ENCODE measurements at regions of chr18 and their contacts with region 1.

Region 1: GRCh38 chr18:70082430-70082829 is 123.1 kb downstream of the RTTN start:
- DNase-seq: no peak
- ATAC-seq: no peak
- H3K4me3 ChIP-seq: no peak overlapping the region
- H3K4me3 Mint-ChIP-seq: no peak overlapping the region
- H3K27ac ChIP-seq: no peak overlapping the region
- H3K27ac Mint-ChIP-seq: no peak overlapping the region
- H3K4me1 ChIP-seq: no peaks in the 10 kb centered on the region
- H3K4me1 Mint-ChIP-seq: no peaks in the 10 kb centered on the region
- H3K27me3 ChIP-seq: no peaks in the 10 kb centered on the region
- H3K27me3 Mint-ChIP-seq: no peaks in the 10 kb centered on the region

Region 2: GRCh38 chr18:68298330-68298729 is 1784.1 kb before region 1 on chr18:
- CTCF ChIA-PET with region 1: no interaction called
- POLR2A ChIA-PET with region 1: no interaction called
- intact Hi-C with region 1: no loop called
- DNase-seq: no peak
- ATAC-seq: no peak
- H3K4me3 ChIP-seq: no peak overlapping the region
- H3K4me3 Mint-ChIP-seq: no peak overlapping the region
- H3K27ac ChIP-seq: no peak overlapping the region
- H3K27ac Mint-ChIP-seq: no peak overlapping the region
- H3K4me1 ChIP-seq: no peaks in the 10 kb centered on the region
- H3K4me1 Mint-ChIP-seq: no peaks in the 10 kb centered on the region
- H3K27me3 ChIP-seq: no peaks in the 10 kb centered on the region
- H3K27me3 Mint-ChIP-seq: no peaks in the 10 kb centered on the region

Region 3: DNA sequence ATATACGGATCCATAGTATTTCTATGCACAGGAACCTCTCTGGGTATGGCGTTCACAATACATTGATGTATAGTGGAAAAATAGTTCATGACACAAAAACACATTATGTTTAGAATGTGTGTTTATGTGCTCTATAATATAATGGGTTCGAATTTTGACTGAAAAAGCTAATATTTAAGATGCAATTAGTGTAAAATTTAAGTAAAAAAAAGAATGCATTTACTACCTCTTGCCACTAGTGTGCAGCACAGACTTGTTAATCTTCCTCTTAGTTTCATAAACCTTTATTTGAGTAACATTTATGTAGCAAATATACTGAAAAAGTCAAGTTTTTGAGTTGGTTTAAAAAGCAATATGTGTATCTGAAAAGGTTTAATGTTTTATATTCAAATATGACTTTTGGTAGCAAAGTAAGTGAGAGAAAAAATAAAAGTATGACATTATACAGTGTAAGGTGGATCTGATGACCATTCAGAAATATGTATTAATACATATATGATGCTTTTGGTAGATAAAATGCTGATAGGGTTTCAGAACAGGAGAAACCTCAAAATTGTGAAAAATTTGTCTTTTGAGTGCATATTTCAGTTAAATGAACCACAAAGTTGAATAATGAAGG is 1235.1 kb before region 1 on chr18:
- CTCF ChIA-PET with region 1: interaction called, 3 read pairs
- POLR2A ChIA-PET with region 1: no interaction called
- intact Hi-C with region 1: loop called (anchors 1 to 2 kb)
- DNase-seq: peak in 3 of 9 donors; percentile 2 to 19 (median 7)
- ATAC-seq: peak; percentile 42
- H3K4me3 ChIP-seq: no peak overlapping the region
- H3K4me3 Mint-ChIP-seq: no peak overlapping the region
- H3K27ac ChIP-seq: no peak overlapping the region
- H3K27ac Mint-ChIP-seq: no peak overlapping the region
- H3K4me1 ChIP-seq: no peaks in the 10 kb centered on the region
- H3K4me1 Mint-ChIP-seq: no peaks in the 10 kb centered on the region
- H3K27me3 ChIP-seq: no peaks in the 10 kb centered on the region
- H3K27me3 Mint-ChIP-seq: no peaks in the 10 kb centered on the region

Region 4: DNA sequence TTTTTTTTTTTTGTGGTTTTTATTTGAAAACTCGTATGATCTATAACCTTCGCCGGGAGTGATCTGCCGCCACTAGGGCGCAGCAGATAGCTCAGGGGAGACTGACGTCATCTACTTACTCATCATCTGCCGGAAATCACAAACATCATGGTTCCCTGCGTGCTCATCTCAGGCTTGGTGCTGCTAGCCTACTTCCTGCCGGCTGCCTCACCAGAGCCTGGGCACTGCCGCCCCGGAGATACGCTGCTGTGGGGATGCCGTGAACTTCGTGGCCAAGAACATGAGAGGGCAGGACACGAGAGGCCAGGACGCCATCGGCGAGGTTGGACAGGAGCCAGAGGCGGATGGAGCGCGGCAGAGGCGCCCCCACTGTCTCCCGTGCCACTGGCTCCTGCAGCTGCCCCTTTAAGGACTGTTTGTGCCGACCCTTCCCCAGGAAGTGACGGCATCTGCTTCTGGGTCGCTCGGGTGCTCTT is 612.9 kb before region 1 on chr18:
- CTCF ChIA-PET with region 1: no interaction called
- POLR2A ChIA-PET with region 1: no interaction called
- intact Hi-C with region 1: loop called (anchors 1 kb)
- DNase-seq: peak in 2 of 9 donors; percentile 3 to 4
- ATAC-seq: peak; percentile 61
- H3K4me3 ChIP-seq: no peak overlapping the region
- H3K4me3 Mint-ChIP-seq: no peak overlapping the region
- H3K27ac ChIP-seq: no peak overlapping the region
- H3K27ac Mint-ChIP-seq: no peak overlapping the region
- H3K4me1 ChIP-seq: no peaks in the 10 kb centered on the region
- H3K4me1 Mint-ChIP-seq: peaks cover 0 to 10% (median 0%) of the 10 kb centered on the region in 7 donors
- H3K27me3 ChIP-seq: no peaks in the 10 kb centered on the region
- H3K27me3 Mint-ChIP-seq: peaks cover 0 to 10% (median 6%) of the 10 kb centered on the region in 5 donors

Region 5: GRCh38 chr18:69636529-69637301 is 445.7 kb before region 1 on chr18:
- CTCF ChIA-PET with region 1: interaction called, 21 read pairs
- POLR2A ChIA-PET with region 1: no interaction called
- intact Hi-C with region 1: loop called (anchors 1 kb)
- DNase-seq: peak in 6 of 9 donors; percentile 16 to 38 (median 24)
- ATAC-seq: peak; percentile 61
- H3K4me3 ChIP-seq: no peak overlapping the region
- H3K4me3 Mint-ChIP-seq: no peak overlapping the region
- H3K27ac ChIP-seq: no peak overlapping the region
- H3K27ac Mint-ChIP-seq: peak overlapping the region in 1 of 9 donors; percentile 12
- H3K4me1 ChIP-seq: no peaks in the 10 kb centered on the region
- H3K4me1 Mint-ChIP-seq: no peaks in the 10 kb centered on the region
- H3K27me3 ChIP-seq: no peaks in the 10 kb centered on the region
- H3K27me3 Mint-ChIP-seq: peaks cover 0 to 5% (median 0%) of the 10 kb centered on the region in 5 donors

Region 6: DNA sequence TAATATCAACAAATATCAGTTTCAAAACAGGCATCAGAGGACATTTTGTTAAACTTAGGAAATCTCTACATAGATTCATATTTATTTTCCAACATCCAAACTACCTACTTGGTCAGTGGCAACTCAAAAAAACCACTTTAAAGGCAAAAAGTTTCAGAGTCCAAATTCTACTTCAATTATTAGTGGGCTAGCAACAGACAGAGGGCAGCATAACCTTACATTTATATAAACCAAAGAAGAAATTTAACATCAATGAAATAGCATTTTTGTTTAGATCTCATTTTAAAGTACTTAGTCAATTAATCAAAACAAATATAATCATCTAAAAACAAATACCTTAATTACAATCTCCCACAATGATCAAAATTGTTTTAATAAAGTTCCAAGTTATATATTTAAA is 89.8 kb after region 1 on chr18:
- CTCF ChIA-PET with region 1: no interaction called
- POLR2A ChIA-PET with region 1: no interaction called
- intact Hi-C with region 1: no loop called
- DNase-seq: no peak
- ATAC-seq: no peak
- H3K4me3 ChIP-seq: no peak overlapping the region
- H3K4me3 Mint-ChIP-seq: no peak overlapping the region
- H3K27ac ChIP-seq: no peak overlapping the region
- H3K27ac Mint-ChIP-seq: no peak overlapping the region
- H3K4me1 ChIP-seq: no peaks in the 10 kb centered on the region
- H3K4me1 Mint-ChIP-seq: peaks cover 0 to 4% (median 0%) of the 10 kb centered on the region in 7 donors
- H3K27me3 ChIP-seq: no peaks in the 10 kb centered on the region
- H3K27me3 Mint-ChIP-seq: no peaks in the 10 kb centered on the region

Measured in naive thymus-derived CD4-positive, alpha-beta T cell (primary cell).